WTC11 (cell line): ENCODE measurements at regions of chr5 and their contacts with region 1.

Region 1: GRCh38 chr5:175534070-175534932 is 55.9 kb downstream of the SFXN1 start:
- DNase-seq: peak; percentile 92
- ATAC-seq: peak; percentile 89
- H3K4me3 Mint-ChIP-seq: peak overlapping the region; percentile 33
- H3K27ac Mint-ChIP-seq: no peak overlapping the region
- H3K4me1 Mint-ChIP-seq: peaks cover 41% of the 10 kb centered on the region
- H3K27me3 Mint-ChIP-seq: no peaks in the 10 kb centered on the region
- CTCF ChIP-seq: peak; percentile 99

Region 2: DNA sequence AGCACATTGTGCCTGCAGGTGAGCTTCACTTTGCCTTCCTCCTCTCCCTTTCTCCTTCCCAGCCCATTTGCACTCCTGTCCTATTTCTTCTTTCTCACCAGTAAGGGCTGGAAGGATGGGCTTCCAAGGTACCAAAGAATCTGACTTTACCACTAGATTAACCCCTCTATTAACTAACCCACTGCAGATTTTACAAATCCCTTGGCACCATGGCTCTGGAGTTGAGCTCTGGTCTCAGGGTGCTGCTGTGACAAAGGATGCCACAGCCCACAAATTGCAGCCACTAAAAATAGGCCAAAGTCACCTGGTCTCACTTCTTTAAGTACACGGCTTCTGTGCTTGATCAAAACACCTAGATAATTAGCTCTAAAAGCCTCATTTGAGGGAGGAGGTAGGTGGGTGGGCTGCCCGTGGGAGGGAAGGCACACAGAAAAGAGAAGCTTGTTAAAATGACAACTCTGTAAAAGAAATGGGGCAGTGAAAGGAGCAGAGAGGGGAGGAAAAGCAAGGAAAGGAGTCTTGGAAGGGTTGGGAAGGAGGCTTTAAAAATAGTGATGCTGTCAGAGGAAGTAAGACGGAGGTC is 417.7 kb before region 1 on chr5:
- CTCF ChIA-PET with region 1: no interaction called
- POLR2A ChIA-PET with region 1: no interaction called
- DNase-seq: no peak
- ATAC-seq: no peak
- H3K4me3 Mint-ChIP-seq: no peak overlapping the region
- H3K27ac Mint-ChIP-seq: no peak overlapping the region
- H3K4me1 Mint-ChIP-seq: peaks cover 35% of the 10 kb centered on the region
- H3K27me3 Mint-ChIP-seq: peaks cover 13% of the 10 kb centered on the region
- CTCF ChIP-seq: no peak

Region 3: DNA sequence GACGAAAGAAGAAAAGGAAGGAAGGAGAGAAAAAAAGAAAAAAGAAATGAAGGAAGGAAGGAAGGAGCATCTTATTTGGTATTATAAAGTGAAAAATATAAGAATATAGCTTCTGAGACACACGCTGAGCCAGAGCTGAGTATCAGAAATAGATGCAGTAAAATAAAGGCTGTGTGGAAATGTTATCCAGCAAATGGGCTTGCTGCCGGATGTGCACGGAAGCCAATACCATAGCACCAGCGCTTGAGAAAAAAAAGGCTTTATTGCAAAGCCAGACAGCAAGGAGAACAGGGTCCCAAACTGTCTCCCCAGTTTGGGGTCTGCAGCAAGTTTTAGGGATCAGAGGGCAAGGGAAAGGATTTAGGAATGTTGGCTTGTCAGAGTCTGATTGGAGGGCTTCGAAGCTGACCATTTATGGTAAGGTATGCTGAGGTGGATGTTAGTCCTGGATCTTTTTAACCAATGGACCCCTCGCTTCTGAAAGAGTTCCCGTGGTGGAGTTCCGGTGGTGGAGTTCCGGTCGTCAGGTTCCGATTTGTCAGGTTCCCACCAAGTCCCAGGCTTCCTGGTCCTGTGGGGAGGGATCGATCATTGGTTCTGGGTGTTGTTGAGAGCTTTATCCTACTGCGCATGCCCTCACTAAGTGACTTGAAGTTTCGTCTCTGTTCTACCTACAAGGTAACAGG is 14.5 kb after region 1 on chr5:
- CTCF ChIA-PET with region 1: interaction called, 59 read pairs
- POLR2A ChIA-PET with region 1: interaction called, 4 read pairs
- DNase-seq: peak; percentile 63
- ATAC-seq: peak; percentile 89
- H3K4me3 Mint-ChIP-seq: peak overlapping the region; percentile 44
- H3K27ac Mint-ChIP-seq: peak overlapping the region; percentile 98
- H3K4me1 Mint-ChIP-seq: peaks cover 83% of the 10 kb centered on the region
- H3K27me3 Mint-ChIP-seq: no peaks in the 10 kb centered on the region; the same call in none of the 2 replicates
- CTCF ChIP-seq: no peak

Region 4: GRCh38 chr5:175590471-175590881 is 56.2 kb after region 1 on chr5:
- CTCF ChIA-PET with region 1: interaction called, 11 read pairs
- POLR2A ChIA-PET with region 1: no interaction called
- DNase-seq: no peak
- ATAC-seq: no peak
- H3K4me3 Mint-ChIP-seq: no peak overlapping the region
- H3K27ac Mint-ChIP-seq: no peak overlapping the region
- H3K4me1 Mint-ChIP-seq: peaks cover 35% of the 10 kb centered on the region
- H3K27me3 Mint-ChIP-seq: peaks cover 7% of the 10 kb centered on the region
- CTCF ChIP-seq: no peak

Region 5: DNA sequence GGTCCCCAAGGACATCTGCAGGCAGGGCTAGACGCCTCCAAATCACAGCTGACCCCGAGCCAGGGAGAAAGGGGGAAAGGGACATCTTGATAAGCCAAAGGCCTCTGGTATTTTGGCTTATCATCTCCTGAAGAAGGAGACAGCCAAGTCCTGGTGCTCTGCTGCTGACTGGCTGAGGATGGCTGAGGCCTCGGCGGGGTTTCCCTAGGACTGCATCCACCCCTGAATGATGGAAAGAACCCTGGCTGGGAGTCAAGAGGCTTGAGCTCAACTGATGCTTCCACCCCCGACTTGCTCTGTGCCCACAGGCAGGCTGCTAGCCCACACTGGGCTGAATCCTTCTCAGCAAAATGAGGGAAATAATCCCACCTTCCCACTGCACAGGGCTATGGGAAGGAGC is 92.7 kb after region 1 on chr5:
- CTCF ChIA-PET with region 1: interaction called, 29 read pairs
- POLR2A ChIA-PET with region 1: no interaction called
- DNase-seq: no peak
- ATAC-seq: no peak
- H3K4me3 Mint-ChIP-seq: no peak overlapping the region
- H3K27ac Mint-ChIP-seq: no peak overlapping the region
- H3K4me1 Mint-ChIP-seq: peaks cover 22% of the 10 kb centered on the region
- H3K27me3 Mint-ChIP-seq: peaks cover 10% of the 10 kb centered on the region
- CTCF ChIP-seq: no peak

Region 6: DNA sequence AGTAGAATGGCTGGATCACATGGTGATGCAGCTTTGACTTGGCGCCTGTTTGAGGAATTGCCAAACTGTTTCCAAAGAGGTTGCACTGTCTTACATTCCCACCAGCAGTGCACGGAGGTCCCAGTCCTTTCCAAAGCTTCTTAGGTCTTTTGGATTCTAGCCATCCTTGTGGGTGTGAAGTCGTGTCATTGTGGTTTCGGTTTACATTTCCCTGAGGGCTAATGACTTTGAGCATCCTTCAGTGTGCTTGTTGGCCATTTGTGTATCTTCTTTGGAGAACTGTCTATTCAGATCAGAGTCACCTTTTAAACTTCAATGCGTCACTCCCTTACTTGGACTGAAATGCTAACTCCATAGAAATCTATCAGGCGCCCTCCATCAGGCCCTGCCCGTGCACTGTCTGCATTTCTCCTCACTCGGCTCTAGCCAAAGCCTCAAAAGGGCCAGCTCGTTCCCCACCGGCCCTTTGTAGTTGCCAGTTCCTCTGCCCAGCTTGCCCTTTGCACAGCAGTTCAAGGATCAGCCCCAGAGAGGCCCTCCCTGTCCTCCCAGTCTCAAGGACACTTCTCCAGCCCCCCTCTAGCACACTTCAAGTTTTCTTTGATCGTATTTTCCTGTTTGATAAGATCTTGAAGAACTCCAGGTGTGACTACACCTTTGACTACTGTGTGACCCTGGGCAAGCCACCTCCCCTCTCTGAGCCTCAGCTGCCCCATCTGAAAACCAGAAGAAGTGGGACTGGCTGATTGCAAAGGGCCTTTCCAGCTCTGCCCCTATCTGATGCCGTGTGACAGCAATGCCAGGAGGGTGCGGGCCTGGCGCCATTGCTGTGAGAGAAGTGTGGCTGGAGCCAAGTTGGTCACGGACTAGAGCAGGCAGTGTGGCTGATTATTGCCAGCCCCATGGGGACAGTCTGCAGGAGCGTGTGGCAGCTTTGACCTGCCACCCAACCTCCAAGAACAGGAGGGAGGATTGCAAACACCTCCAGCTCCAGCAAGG is 129.2 kb after region 1 on chr5:
- CTCF ChIA-PET with region 1: interaction called, 58 read pairs
- POLR2A ChIA-PET with region 1: no interaction called
- DNase-seq: no peak
- ATAC-seq: no peak
- H3K4me3 Mint-ChIP-seq: no peak overlapping the region
- H3K27ac Mint-ChIP-seq: no peak overlapping the region
- H3K4me1 Mint-ChIP-seq: peaks cover 17% of the 10 kb centered on the region
- H3K27me3 Mint-ChIP-seq: peaks cover 3% of the 10 kb centered on the region; the same call in 1 of the 2 replicates
- CTCF ChIP-seq: no peak

Region 7: GRCh38 chr5:175696139-175696854 is 162.0 kb after region 1 on chr5:
- CTCF ChIA-PET with region 1: interaction called, 84 read pairs
- POLR2A ChIA-PET with region 1: no interaction called
- DNase-seq: peak; percentile 84
- ATAC-seq: peak; percentile 79
- H3K4me3 Mint-ChIP-seq: no peak overlapping the region
- H3K27ac Mint-ChIP-seq: peak overlapping the region; percentile 51
- H3K4me1 Mint-ChIP-seq: peaks cover 28% of the 10 kb centered on the region
- H3K27me3 Mint-ChIP-seq: no peaks in the 10 kb centered on the region
- CTCF ChIP-seq: peak; percentile 68; the same call in 1 of the 2 replicates

Region 8: GRCh38 chr5:175873088-175873454 is 338.8 kb after region 1 on chr5:
- CTCF ChIA-PET with region 1: interaction called, 11 read pairs
- POLR2A ChIA-PET with region 1: no interaction called
- DNase-seq: peak; percentile 84
- ATAC-seq: peak; percentile 33
- H3K4me3 Mint-ChIP-seq: peak overlapping the region; percentile 64
- H3K27ac Mint-ChIP-seq: no peak overlapping the region
- H3K4me1 Mint-ChIP-seq: peaks cover 41% of the 10 kb centered on the region
- H3K27me3 Mint-ChIP-seq: peaks cover 32% of the 10 kb centered on the region
- CTCF ChIP-seq: peak; percentile 30; the same call in 1 of the 2 replicates